ENCODE measurements at regions of chr7 and their contacts with region 1.

Region 1: GRCh38 chr7:80134536-80135320 is at the start of gene GNAI1:
- DNase-seq: peak; percentile 94
- H3K4me3 ChIP-seq: peak within 1 kb of the TSS; percentile 77 to 93 (median 87)
- H3K27ac ChIP-seq: peak within 1 kb of the TSS; percentile 92
- H3K4me1 ChIP-seq: peaks cover 28% of the 10 kb centered on the region
- H3K27me3 ChIP-seq: no peaks in the 10 kb centered on the region
- CTCF ChIP-seq: peak; percentile 35 to 47
- total RNA-seq, gene GNAI1: 39.6 to 39.8 TPM

Region 2: DNA sequence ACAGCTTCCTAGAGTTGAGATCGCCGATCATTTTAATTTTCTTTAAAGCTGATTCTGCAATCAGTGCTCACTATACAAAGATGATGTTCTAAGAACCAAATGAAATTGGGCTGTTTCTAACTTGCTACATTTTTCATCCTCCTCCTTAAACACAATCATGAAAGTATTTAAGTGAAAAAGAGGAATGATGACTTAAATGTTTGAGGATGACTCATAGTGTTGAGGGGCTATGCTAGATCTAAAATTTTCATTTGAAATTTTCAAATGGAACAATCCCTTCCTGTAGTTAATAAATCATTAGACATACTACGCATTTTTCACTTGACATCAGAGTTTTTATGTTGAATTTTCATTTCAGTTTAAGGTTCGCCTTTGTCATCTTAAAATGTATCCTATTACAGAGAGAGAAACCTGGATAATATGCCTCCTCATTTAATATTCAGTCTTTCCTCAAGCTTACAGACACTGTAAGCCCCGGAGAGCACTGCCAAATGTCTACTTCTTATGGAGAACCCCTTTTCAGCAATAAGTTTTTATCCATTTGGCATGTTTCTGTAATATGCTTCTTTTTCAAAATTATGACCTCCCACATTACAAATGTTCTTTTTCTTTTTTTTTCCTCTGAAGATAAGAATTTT is 1180.9 kb before region 1 on chr7:
- CTCF ChIA-PET with region 1: no interaction called
- dilution Hi-C with region 1: no loop called
- in situ Hi-C with region 1: no loop called
- intact Hi-C with region 1: no loop called
- DNase-seq: no peak
- H3K4me3 ChIP-seq: no peak overlapping the region
- H3K27ac ChIP-seq: no peak overlapping the region
- H3K4me1 ChIP-seq: no peaks in the 10 kb centered on the region
- H3K27me3 ChIP-seq: peaks cover 2% of the 10 kb centered on the region
- CTCF ChIP-seq: no peak

Region 3: DNA sequence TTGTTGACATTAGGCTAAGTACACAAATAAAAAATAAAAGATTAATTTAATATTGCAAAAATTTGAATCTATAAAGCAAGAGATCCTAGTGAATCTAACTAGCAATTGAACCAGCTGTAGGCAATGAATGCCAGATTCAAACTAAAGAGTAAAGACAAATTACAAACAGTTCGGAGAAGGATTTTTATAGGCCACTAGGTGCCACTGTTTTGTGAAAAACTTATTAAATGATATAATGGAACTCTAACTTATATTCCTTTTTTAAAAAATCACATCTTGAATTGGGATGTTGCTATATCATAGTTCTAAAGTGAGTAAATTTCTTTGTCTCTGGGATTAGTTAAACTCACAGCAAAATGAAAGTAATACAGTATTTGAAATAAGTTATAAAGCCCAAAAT is 39.2 kb before region 1 on chr7:
- CTCF ChIA-PET with region 1: interaction called, 6 read pairs
- dilution Hi-C with region 1: loop called (anchors 5 kb)
- in situ Hi-C with region 1: no loop called
- intact Hi-C with region 1: loop called (anchors 2 kb)
- DNase-seq: no peak
- H3K4me3 ChIP-seq: no peak overlapping the region
- H3K27ac ChIP-seq: no peak overlapping the region
- H3K4me1 ChIP-seq: no peaks in the 10 kb centered on the region
- H3K27me3 ChIP-seq: no peaks in the 10 kb centered on the region
- CTCF ChIP-seq: peak; percentile 22 to 46

Region 4: DNA sequence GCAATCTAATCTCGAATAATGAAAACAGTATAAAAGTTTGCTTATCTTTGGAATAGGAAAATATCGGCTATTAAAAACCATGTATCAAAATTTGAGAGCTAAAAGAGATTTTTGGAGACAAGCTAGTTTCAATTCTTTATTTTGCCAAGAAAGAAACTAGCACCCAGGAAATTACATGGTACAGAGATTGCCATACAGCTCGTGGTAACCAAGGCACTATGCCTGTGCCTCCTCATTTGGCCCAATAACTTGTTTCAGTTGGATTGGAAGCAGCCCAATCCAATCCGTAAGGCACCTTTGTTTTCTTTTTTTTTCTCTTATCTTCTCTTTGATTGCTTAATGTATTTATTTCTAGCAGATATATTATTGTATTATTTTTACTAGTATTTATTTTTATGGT is 54.9 kb after region 1 on chr7:
- CTCF ChIA-PET with region 1: no interaction called
- dilution Hi-C with region 1: loop called (anchors 10 kb)
- in situ Hi-C with region 1: no loop called
- intact Hi-C with region 1: no loop called
- DNase-seq: no peak
- H3K4me3 ChIP-seq: no peak overlapping the region
- H3K27ac ChIP-seq: no peak overlapping the region
- H3K4me1 ChIP-seq: no peaks in the 10 kb centered on the region
- H3K27me3 ChIP-seq: no peaks in the 10 kb centered on the region
- CTCF ChIP-seq: no peak

Region 5: DNA sequence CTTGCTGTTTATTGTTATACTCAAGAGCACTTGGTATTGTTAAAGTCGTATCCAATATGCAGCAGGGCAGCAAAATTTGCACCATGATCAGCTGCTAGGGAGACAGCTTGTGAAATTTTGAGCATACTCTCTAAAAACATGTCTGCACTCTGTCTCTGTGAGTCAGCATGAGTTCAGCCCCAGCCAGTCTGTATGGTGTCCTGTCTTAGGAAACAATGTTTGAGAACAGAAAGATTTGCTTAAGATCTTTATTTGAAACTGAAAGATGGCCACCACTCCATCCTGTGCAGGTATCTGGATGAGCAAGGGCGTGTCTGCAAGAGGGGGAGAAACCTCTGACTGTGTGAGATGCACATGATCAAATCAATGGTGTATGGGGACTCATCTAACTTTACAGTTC is 97.0 kb after region 1 on chr7:
- CTCF ChIA-PET with region 1: no interaction called
- dilution Hi-C with region 1: loop called (anchors 5 kb)
- in situ Hi-C with region 1: no loop called
- intact Hi-C with region 1: no loop called
- DNase-seq: peak; percentile 84
- H3K4me3 ChIP-seq: no peak overlapping the region
- H3K27ac ChIP-seq: peak overlapping the region; percentile 59
- H3K4me1 ChIP-seq: peaks cover 25% of the 10 kb centered on the region
- H3K27me3 ChIP-seq: no peaks in the 10 kb centered on the region
- CTCF ChIP-seq: no peak

Region 6: DNA sequence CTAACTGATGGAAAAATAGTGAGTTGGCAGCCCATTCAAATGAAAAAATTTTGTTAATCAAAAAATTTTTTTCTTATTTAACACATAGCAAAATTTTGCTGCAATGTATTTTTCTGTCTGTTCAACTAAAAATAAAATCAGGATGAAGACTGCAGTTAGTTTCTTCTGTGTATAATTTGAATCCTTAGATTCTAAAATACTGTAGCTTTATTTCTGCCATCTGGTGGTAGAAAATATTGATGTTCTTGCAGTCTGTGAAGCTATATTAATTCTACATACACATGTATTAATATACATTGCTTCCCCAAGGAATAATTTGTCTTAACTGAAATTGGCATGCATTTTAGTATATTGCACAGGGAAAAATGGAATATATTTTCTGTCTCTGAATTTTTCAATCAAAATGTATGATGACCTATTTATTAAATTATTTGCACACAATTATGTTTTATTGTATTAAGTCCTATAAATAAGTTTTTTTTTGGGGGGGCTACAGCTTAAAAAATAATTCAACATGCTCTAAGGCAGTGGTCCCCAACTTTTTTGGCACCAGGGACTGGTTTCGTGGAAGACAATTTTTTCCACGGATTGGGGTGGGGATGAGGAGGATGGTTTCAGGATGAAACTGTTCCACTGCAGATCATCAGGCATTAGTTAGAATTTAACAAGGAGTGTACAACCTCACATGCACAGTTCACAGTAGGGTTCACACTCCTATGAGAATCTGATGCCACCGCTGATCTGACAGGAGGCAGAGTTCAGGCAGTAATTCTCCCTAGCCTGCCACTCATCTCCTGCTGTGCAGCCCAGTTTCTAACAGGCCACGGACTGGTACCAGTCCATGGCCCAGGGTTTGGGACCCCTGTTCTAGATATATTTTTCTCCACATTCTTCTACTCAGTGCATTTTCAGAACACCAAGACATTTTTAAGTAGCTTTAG is 257.8 kb after region 1 on chr7:
- CTCF ChIA-PET with region 1: interaction called, 23 read pairs
- dilution Hi-C with region 1: no loop called
- in situ Hi-C with region 1: loop called in 1 of 2 experiments (anchors 25 kb)
- intact Hi-C with region 1: loop called (anchors 1 kb)
- DNase-seq: peak; percentile 11
- H3K4me3 ChIP-seq: no peak overlapping the region
- H3K27ac ChIP-seq: no peak overlapping the region
- H3K4me1 ChIP-seq: peaks cover 4% of the 10 kb centered on the region
- H3K27me3 ChIP-seq: no peaks in the 10 kb centered on the region
- CTCF ChIP-seq: peak; percentile 54

Region 7: DNA sequence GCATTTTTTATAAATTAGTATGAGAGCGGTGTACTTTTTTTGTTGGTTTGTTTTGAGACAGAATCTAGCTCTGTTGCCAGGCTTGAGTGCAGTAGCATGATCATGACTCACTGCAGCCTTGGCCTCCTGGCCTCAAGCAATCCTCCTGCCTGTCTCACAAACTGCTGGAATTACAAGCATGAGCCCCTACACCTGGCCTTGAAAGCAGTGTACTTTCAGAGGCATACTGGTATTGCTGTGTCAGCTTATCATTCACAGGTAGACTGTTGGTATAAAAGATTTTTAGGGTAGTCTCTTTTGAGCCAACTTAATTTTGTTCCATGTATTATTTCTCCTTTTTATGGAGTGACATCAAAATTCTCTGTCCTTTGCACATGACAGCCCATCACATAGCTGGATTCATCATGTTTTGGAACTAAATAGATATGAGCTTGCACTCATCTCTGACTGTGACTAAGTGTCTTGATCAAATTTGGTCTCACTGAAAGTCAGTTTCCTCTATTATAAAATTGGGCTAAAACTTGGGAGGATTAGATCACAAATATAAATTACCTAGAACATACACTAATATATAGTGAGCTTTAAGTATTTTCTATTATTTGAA is 364.7 kb after region 1 on chr7:
- CTCF ChIA-PET with region 1: no interaction called
- dilution Hi-C with region 1: no loop called
- in situ Hi-C with region 1: no loop called
- intact Hi-C with region 1: loop called (anchors 1 kb)
- DNase-seq: peak; percentile 95
- H3K4me3 ChIP-seq: peak overlapping the region in 2 of 3 experiments; percentile 19 to 32
- H3K27ac ChIP-seq: peak overlapping the region; percentile 100
- H3K4me1 ChIP-seq: peaks cover 11% of the 10 kb centered on the region
- H3K27me3 ChIP-seq: no peaks in the 10 kb centered on the region
- CTCF ChIP-seq: no peak